Activated T-helper 2 cell treated with anti-CD3 and anti-CD28 coated beads, Interferon-gamma antibody, Interleukin-2, Interleukin-4, amounts not matched to agents 10 μg/mL and 5 μg/mL and 100 μg/mL, durations not matched to agents 14 hours and 24 hours and 36 hours (primary cell): ENCODE measurements at regions of chr4 and their contacts with region 1.

Region 1: GRCh38 chr4:10096201-10096977 is 20.2 kb downstream of the WDR1 start:
- DNase-seq: peak; percentile 73
- H3K4me3 Mint-ChIP-seq: peak overlapping the region; percentile 5
- H3K27ac Mint-ChIP-seq: peak overlapping the region; percentile 92
- H3K4me1 Mint-ChIP-seq: peaks cover 86% of the 10 kb centered on the region
- H3K27me3 Mint-ChIP-seq: no peaks in the 10 kb centered on the region

Region 2: DNA sequence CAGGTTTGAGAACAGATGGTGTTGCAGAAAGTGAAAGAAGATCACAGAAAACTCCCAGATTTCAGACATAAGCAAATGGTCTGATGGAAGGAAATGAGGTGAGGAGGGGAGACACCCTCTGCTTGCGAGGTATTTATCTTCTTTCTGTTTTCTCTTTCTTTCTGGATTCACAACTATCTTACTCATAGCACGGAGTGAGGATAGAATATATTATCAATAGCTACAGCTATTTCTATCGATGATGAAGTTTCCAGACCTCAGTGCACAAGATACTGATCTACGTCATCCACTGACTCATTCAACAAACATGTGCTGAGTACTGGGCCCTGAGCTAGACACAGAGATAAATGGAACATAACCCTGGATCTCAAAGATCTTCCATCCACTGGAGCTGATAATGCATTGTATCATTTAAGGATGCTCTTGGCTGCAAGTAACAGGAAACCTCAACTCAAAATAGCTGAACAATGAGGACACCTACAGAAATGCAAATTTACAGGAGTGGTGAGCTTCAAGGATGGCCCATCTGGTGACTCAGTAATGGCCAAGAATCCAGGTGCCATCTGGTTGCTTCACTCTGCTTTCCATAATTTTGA is 96.3 kb before region 1 on chr4:
- intact Hi-C with region 1: loop called (anchors 5 kb)
- DNase-seq: no peak
- H3K4me3 Mint-ChIP-seq: no peak overlapping the region
- H3K27ac Mint-ChIP-seq: peak overlapping the region; percentile 58
- H3K4me1 Mint-ChIP-seq: peaks cover 58% of the 10 kb centered on the region
- H3K27me3 Mint-ChIP-seq: no peaks in the 10 kb centered on the region

Region 3: DNA sequence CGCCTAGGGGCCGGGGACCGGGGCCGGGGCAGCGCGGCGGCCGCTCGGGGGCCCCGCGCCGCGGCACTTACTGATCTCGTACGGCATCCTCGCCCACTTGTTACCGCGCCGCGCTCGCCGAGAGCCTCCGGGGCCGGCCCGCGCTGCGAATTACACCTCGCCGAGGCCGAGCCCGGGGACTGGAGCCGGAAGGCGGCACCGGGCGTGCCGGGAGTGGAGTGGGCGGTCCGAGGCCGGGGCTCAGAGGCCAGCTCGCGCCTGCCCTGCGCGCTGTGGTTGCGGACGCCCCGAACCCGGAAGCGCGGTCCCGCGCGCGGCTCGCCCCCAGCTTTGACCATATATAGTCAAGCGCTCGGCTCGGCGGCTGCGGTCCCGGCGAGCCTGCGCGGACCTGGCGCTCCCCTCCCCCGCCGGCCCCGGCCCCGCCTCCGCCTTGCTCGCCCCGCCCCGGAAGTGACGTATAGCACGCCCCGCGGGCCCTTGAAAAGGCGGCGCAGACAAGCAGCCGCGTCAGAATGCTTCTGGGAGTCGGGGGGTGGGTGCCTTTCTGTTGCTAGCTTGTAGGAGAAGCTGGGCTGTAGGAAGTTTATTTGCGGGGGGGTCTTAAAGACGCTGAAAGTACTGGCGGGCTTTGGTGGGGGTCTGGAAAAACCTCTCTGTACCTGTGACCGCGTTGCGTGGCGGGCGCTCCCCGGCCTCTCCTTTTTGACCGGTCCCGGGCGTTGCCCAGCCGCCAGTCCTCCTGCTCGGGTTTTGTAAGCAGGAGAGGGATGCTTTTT is 20.4 kb after region 1 on chr4 and contains the start of gene WDR1:
- intact Hi-C with region 1: loop called (anchors 1 kb)
- DNase-seq: peak; percentile 90
- H3K4me3 Mint-ChIP-seq: peak within 1 kb of the TSS; percentile 93
- H3K27ac Mint-ChIP-seq: peak within 1 kb of the TSS; percentile 96
- H3K4me1 Mint-ChIP-seq: peaks cover 65% of the 10 kb centered on the region
- H3K27me3 Mint-ChIP-seq: no peaks in the 10 kb centered on the region
- total RNA-seq, gene WDR1: 387 and 398 TPM in 2 replicates

Region 4: GRCh38 chr4:10461091-10461849 is 364.9 kb after region 1 on chr4:
- intact Hi-C with region 1: loop called (anchors 5 kb)
- DNase-seq: peak; percentile 75
- H3K4me3 Mint-ChIP-seq: peak overlapping the region; percentile 75
- H3K27ac Mint-ChIP-seq: no peak overlapping the region
- H3K4me1 Mint-ChIP-seq: peaks cover 23% of the 10 kb centered on the region
- H3K27me3 Mint-ChIP-seq: peaks cover 41% of the 10 kb centered on the region